HEK293 (cell line): ENCODE measurements at regions of chr11 and their contacts with region 1.

Region 1: GRCh38 chr11:10307442-10308207 is 2.8 kb downstream of the ADM start:
- H3K4me3 ChIP-seq: peak overlapping the region; percentile 48
- H3K27ac ChIP-seq: peak overlapping the region; percentile 86
- H3K4me1 ChIP-seq: no peaks in the 10 kb centered on the region
- CTCF ChIP-seq: peak; percentile 97

Region 2: DNA sequence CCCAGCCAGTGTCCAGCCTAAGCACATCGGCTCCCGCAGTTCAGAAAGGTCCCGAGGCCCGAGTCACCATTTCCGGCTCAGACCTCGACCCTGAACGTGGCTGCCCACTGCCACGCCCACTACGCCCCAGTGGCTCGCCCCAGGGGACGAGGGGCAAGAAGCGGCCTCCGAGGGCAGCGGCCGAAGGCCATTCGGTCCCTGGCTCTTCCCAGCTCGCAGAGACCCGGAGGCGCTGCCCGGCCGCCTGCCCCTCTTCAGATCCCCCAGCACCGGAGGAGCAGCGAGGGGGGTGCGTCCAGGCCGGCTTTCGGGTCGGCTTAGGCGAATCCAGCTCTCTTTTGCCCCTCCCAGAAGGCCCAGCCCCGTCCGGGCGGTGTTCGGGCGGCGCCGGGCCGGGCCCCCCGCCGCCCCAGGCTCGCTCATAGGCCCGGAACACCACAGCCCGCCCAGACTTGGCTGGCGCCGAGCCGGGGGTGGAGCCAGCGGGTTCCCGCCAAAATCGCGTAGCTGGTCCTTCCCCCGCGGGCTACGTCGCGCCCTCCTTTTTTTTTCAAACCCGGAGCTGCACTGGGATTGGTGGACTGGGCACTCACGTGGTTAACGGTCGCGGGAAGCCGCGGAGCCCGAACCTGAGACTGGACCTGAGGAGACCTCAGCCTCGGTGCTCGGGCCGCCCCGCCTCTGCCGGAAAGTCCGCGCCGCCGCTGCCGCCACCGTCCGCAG is 734.4 kb before region 1 on chr11 and contains the start of gene WEE1:
- CTCF ChIA-PET with region 1: no interaction called
- POLR2A ChIA-PET with region 1: interaction called, 12 read pairs
- H3K4me3 ChIP-seq: peak within 1 kb of the TSS; percentile 100
- H3K27ac ChIP-seq: peak within 1 kb of the TSS; percentile 98
- H3K4me1 ChIP-seq: no peaks in the 10 kb centered on the region
- CTCF ChIP-seq: 0 out of 2 replicates have a peak, but pooled peaks have one; percentile 11

Region 3: GRCh38 chr11:10181811-10182210 is 125.8 kb before region 1 on chr11:
- CTCF ChIA-PET with region 1: interaction called, 9 read pairs
- POLR2A ChIA-PET with region 1: interaction called, 20 read pairs
- H3K4me3 ChIP-seq: no peak overlapping the region
- H3K27ac ChIP-seq: no peak overlapping the region
- H3K4me1 ChIP-seq: no peaks in the 10 kb centered on the region
- CTCF ChIP-seq: no peak

Region 4: DNA sequence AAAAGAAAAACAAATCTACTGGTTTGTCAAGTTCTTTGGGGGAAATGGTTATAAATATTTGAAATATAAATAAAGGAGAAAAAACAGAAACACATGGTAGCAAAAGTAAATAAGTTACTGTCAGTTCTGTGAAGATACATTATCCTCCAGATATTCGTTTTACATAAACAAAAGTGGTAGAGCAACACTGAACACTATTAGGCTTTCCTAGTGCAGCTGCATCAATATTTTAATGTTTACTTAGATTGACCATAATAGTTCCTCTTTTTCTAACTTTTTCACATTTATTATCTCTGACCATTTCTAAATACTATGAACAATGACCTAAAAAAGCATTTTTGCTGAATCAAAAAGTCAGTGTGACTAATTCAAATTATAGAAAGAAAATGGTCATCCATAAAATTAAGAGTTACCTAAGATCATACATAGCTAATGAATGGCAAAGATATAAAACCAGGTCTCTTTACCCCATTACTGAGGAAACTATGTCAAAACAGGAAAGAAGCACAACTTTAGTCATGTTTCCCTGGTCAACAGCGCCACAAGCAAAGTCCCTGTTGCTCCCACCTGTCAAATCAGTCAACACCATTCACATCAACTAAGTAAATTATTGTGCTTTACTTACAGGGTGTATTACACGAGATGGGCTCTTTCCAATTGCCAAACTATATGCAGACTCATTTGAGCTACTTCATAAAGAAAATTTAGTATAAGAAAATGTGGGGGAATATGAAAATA is 52.1 kb before region 1 on chr11:
- CTCF ChIA-PET with region 1: no interaction called
- POLR2A ChIA-PET with region 1: interaction called, 25 read pairs
- H3K4me3 ChIP-seq: no peak overlapping the region
- H3K27ac ChIP-seq: no peak overlapping the region
- H3K4me1 ChIP-seq: no peaks in the 10 kb centered on the region; the same call in 1 of the 2 replicates
- CTCF ChIP-seq: no peak

Region 5: DNA sequence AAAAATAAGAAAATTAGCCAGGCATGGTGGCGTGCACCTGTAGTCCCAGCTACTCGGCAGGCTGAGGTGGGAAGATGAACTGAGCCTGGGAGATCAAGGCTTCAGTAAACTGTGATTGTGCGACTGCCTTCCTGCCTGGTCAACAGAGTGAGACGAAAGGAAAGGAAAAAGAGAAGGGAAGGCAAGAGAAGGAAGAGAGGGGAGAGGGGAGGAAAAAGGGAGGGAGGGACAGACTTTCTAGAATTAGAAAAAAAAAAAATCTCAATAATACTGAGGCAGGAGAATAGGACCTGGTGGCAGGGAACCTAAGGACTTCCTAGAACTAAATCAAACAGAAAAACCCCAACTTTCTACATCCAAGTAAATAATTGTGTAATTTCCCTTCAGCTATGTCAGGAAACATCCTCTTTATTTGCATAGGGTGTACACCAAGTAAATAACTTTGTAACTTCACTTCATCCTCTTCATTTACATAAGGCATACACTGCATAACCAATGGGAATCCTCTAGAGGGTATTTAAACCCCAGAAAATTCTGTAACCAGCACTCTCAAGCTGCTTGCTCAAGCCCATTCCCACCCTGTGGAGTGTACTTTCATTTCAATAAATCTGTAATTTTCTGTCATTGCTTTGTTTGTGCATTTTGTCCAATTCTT is 22.4 kb before region 1 on chr11:
- CTCF ChIA-PET with region 1: interaction called, 12 read pairs
- POLR2A ChIA-PET with region 1: interaction called, 19 read pairs
- H3K4me3 ChIP-seq: no peak overlapping the region
- H3K27ac ChIP-seq: no peak overlapping the region
- H3K4me1 ChIP-seq: no peaks in the 10 kb centered on the region
- CTCF ChIP-seq: no peak

Region 6: GRCh38 chr11:10322830-10323792 is 15.5 kb after region 1 on chr11:
- CTCF ChIA-PET with region 1: interaction called, 44 read pairs
- POLR2A ChIA-PET with region 1: interaction called, 16 read pairs
- H3K4me3 ChIP-seq: no peak overlapping the region
- H3K27ac ChIP-seq: no peak overlapping the region
- H3K4me1 ChIP-seq: no peaks in the 10 kb centered on the region
- CTCF ChIP-seq: no peak

Region 7: GRCh38 chr11:10540923-10541560 is 233.4 kb after region 1 on chr11 and contains the start of gene RNF141:
- CTCF ChIA-PET with region 1: no interaction called
- POLR2A ChIA-PET with region 1: interaction called, 13 read pairs
- H3K4me3 ChIP-seq: peak within 1 kb of the TSS; percentile 85
- H3K27ac ChIP-seq: no peak within 1 kb of the TSS; the same call in 1 of the 2 replicates
- H3K4me1 ChIP-seq: no peaks in the 10 kb centered on the region
- CTCF ChIP-seq: peak; percentile 94